ENCODE measurements at regions of chr9 and their contacts with region 1.

Region 1: DNA sequence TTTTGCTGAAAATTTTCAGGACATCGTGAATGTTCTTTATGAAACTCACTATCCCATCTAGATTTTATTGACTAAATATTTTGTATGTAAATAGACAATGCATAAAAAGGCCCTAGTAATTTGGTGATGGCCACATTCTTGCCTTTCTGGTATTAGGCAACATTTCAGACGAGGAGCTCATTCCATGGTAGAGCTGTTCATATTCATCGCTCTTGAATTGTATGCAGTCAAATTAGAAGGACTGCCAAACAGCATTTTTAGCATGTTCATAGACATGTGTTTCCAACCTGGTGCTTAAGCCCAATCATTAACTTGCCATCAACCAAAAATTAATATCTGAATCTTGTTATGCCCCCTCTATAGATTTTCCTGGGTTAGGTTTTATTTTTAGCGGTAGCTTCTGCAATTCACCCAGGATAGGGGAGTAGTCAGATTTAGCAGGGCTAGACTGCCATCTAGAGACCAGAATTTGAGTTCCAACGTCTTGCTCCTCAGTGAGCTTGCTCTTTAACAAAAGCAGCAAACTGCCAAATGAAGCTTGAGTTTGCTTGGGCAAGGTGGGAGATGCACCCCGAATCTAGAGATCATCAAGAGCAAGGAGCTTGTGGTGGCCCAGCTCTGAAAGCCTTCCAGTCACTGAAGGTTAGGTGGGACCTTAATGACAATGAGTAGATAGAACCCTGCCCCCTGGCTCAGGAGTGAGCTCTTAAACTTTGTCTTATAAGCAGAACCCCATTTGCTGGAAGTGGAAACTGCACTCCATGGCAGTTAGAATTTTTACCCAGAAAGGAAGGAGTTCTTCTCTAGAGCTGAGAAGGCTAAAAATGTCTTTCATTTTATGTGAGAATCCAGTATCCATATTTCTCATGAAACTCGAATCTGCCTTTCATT is 456.2 kb downstream of the RASEF start:
- DNase-seq: peak; percentile 60 to 71 (median 61)
- ATAC-seq: peak; percentile 71
- H3K4me3 ChIP-seq: no peak overlapping the region
- H3K27ac ChIP-seq: peak overlapping the region; percentile 59 to 82 (median 72)
- H3K4me1 ChIP-seq: peaks cover 39% of the 10 kb centered on the region
- H3K27me3 ChIP-seq: no peaks in the 10 kb centered on the region
- CTCF ChIP-seq: peak; percentile 44 to 86 (median 77)
- POLR2A ChIP-seq: no peak

Region 2: GRCh38 chr9:82539856-82540579 is 66.7 kb before region 1 on chr9:
- intact Hi-C with region 1: loop called (anchors 5 kb)
- DNase-seq: peak in 2 of 4 donors; percentile 14 to 24
- ATAC-seq: no peak
- H3K4me3 ChIP-seq: no peak overlapping the region
- H3K27ac ChIP-seq: no peak overlapping the region
- H3K4me1 ChIP-seq: no peaks in the 10 kb centered on the region
- H3K27me3 ChIP-seq: no peaks in the 10 kb centered on the region
- CTCF ChIP-seq: no peak
- POLR2A ChIP-seq: no peak

Region 3: GRCh38 chr9:82934952-82935351 is 328.2 kb after region 1 on chr9:
- intact Hi-C with region 1: no loop called
- DNase-seq: peak in 1 of 4 donors; percentile 16
- ATAC-seq: peak; percentile 68
- H3K4me3 ChIP-seq: no peak overlapping the region
- H3K27ac ChIP-seq: no peak overlapping the region
- H3K4me1 ChIP-seq: peaks cover 12% of the 10 kb centered on the region
- H3K27me3 ChIP-seq: no peaks in the 10 kb centered on the region
- CTCF ChIP-seq: no peak
- POLR2A ChIP-seq: no peak

Region 4: DNA sequence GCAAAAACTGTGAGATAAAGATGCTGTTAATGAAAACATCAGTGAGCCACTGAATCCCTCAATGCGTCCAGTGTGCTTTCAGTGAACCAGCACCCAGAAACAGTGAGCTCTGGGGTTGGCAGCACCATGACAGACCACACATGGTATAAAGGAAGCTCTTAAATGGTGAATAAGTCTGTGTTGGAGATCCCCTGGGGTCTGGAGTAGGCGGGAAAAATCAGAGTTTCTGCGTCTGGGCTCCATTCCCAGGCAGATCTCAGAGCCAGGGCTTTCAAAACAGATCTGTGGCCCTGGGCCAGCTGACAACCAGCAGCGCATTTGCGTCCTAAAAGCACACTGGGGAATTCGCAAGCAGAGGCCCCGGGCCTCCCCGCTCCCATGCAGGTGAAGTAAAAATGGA is 697.9 kb after region 1 on chr9:
- intact Hi-C with region 1: no loop called
- DNase-seq: peak; percentile 70 to 88 (median 81)
- ATAC-seq: peak; percentile 89
- H3K4me3 ChIP-seq: no peak overlapping the region
- H3K27ac ChIP-seq: peak overlapping the region in 2 of 4 donors; percentile 41 to 63
- H3K4me1 ChIP-seq: peaks cover 13% of the 10 kb centered on the region
- H3K27me3 ChIP-seq: no peaks in the 10 kb centered on the region
- CTCF ChIP-seq: no peak
- POLR2A ChIP-seq: no peak